ENCODE measurements at regions of chr9 and their contacts with region 1.

Region 1: GRCh38 chr9:114805670-114806525 is at the start of gene TNFSF15:
- DNase-seq: peak; percentile 80
- H3K4me3 Mint-ChIP-seq: peak within 1 kb of the TSS; percentile 79
- H3K27ac Mint-ChIP-seq: peak within 1 kb of the TSS; percentile 39
- H3K4me1 Mint-ChIP-seq: peaks cover 48% of the 10 kb centered on the region
- H3K27me3 Mint-ChIP-seq: peaks cover 17% of the 10 kb centered on the region
- total RNA-seq, gene TNFSF15: 1.4 and 1.5 TPM in 2 replicates

Region 2: GRCh38 chr9:114691046-114691955 is 114.6 kb before region 1 on chr9:
- intact Hi-C with region 1: loop called (anchors 2 kb)
- DNase-seq: peak; percentile 93
- H3K4me3 Mint-ChIP-seq: peak overlapping the region; percentile 59
- H3K27ac Mint-ChIP-seq: peak overlapping the region; percentile 97
- H3K4me1 Mint-ChIP-seq: peaks cover 80% of the 10 kb centered on the region
- H3K27me3 Mint-ChIP-seq: no peaks in the 10 kb centered on the region

Region 3: DNA sequence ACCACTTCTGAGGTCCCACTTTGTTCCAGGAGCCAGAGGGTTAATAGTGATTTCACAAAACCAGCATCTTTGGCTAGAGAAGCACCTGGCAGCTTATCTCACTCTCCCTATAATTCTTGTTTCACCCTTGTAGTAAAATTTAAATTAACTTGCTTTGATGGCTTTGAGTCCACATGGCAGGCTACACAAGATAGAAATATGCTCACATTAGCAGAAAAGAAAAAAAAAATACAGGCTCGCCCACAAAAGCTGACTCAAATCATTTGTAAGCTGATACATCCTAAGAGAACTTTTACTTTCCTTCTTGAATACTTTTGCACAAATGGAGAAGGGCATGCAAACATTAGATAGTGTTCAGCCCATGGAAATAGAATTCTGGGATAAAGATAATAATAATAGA is 36.3 kb before region 1 on chr9:
- intact Hi-C with region 1: loop called (anchors 2 kb)
- DNase-seq: peak; percentile 62
- H3K4me3 Mint-ChIP-seq: no peak overlapping the region
- H3K27ac Mint-ChIP-seq: no peak overlapping the region
- H3K4me1 Mint-ChIP-seq: peaks cover 8% of the 10 kb centered on the region
- H3K27me3 Mint-ChIP-seq: peaks cover 7% of the 10 kb centered on the region

Region 4: GRCh38 chr9:114861922-114862605 is 56.2 kb after region 1 on chr9:
- intact Hi-C with region 1: loop called (anchors 1 kb)
- DNase-seq: no peak
- H3K4me3 Mint-ChIP-seq: no peak overlapping the region
- H3K27ac Mint-ChIP-seq: no peak overlapping the region
- H3K4me1 Mint-ChIP-seq: peaks cover 13% of the 10 kb centered on the region
- H3K27me3 Mint-ChIP-seq: peaks cover 12% of the 10 kb centered on the region

Region 5: GRCh38 chr9:115013998-115014397 is 208.1 kb after region 1 on chr9:
- intact Hi-C with region 1: loop called (anchors 5 kb)
- DNase-seq: peak; percentile 93
- H3K4me3 Mint-ChIP-seq: peak overlapping the region; percentile 18
- H3K27ac Mint-ChIP-seq: peak overlapping the region; percentile 77
- H3K4me1 Mint-ChIP-seq: peaks cover 55% of the 10 kb centered on the region
- H3K27me3 Mint-ChIP-seq: peaks cover 2% of the 10 kb centered on the region

Measured in activated CD4-positive, alpha-beta T cell treated with anti-CD3 and anti-CD28 coated beads, Interleukin-2, amount 10 ng/mL, durations not matched to agents 24 days and 14 days (primary cell).